Ovary (tissue), 10 donors: ENCODE measurements at regions of chr1 and their contacts with region 1.

Region 1: GRCh38 chr1:67766141-67766978 is 66.9 kb downstream of the GNG12 start:
- DNase-seq: peak; percentile 65 to 76 (median 73)
- H3K4me3 ChIP-seq: peak overlapping the region; percentile 19
- H3K27ac ChIP-seq: peak overlapping the region in 1 of 2 donors; percentile 38
- H3K4me1 ChIP-seq: no peaks in the 10 kb centered on the region
- H3K27me3 ChIP-seq: no peaks in the 10 kb centered on the region
- CTCF ChIP-seq: peak; percentile 67 to 87 (median 87)
- EP300 ChIP-seq: no peak
- POLR2A ChIP-seq: no peak

Region 2: GRCh38 chr1:67832737-67833601 is 66.6 kb after region 1 on chr1 and contains the start of gene GNG12:
- intact Hi-C with region 1: loop called in 1 of 4 experiments (anchors 5 kb)
- DNase-seq: peak; percentile 73 to 83 (median 80)
- H3K4me3 ChIP-seq: peak within 1 kb of the TSS; percentile 75
- H3K27ac ChIP-seq: peak within 1 kb of the TSS; percentile 65 to 72
- H3K4me1 ChIP-seq: peaks cover 6% of the 10 kb centered on the region
- H3K27me3 ChIP-seq: no peaks in the 10 kb centered on the region
- CTCF ChIP-seq: no peak
- EP300 ChIP-seq: no peak
- POLR2A ChIP-seq: peak; percentile 49
- total RNA-seq, gene GNG12: 50.6 to 84.4 (median 68.0) TPM

Region 3: DNA sequence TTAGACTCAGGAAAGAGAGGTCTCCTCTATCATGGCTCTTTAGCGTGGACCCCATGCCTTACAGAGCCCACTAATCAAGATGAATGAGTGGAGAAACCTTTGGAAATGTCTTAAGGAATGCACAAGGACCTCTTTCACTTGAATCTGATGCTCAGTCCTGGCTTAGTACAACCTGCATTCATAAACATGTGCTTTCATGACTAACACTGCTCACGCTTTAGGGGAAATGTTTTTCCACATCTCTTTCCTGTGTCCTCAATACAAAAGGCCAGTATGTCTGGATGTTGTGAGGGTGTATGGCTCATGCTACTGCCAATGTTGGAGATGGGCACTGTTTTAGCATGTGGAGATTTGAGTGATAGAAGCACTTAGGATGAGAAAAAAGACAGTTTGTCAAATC is 81.1 kb after region 1 on chr1:
- intact Hi-C with region 1: loop called in 2 of 4 experiments (anchors 5 kb)
- DNase-seq: no peak
- H3K4me3 ChIP-seq: no peak overlapping the region
- H3K27ac ChIP-seq: no peak overlapping the region
- H3K4me1 ChIP-seq: peaks cover 4% of the 10 kb centered on the region
- H3K27me3 ChIP-seq: no peaks in the 10 kb centered on the region
- CTCF ChIP-seq: no peak
- EP300 ChIP-seq: no peak
- POLR2A ChIP-seq: no peak

Region 4: GRCh38 chr1:68111519-68112436 is 345.4 kb after region 1 on chr1:
- intact Hi-C with region 1: loop called in 3 of 4 experiments (anchors 5 to 10 kb)
- DNase-seq: peak; percentile 82 to 91 (median 84)
- H3K4me3 ChIP-seq: no peak overlapping the region
- H3K27ac ChIP-seq: peak overlapping the region in 1 of 2 donors; percentile 3
- H3K4me1 ChIP-seq: peaks cover 3% of the 10 kb centered on the region
- H3K27me3 ChIP-seq: no peaks in the 10 kb centered on the region
- CTCF ChIP-seq: peak; percentile 60 to 74 (median 63)
- EP300 ChIP-seq: no peak
- POLR2A ChIP-seq: no peak

Region 5: GRCh38 chr1:68339471-68339870 is 573.1 kb after region 1 on chr1:
- intact Hi-C with region 1: loop called in 1 of 4 experiments (anchors 5 kb)
- DNase-seq: no peak
- H3K4me3 ChIP-seq: no peak overlapping the region
- H3K27ac ChIP-seq: no peak overlapping the region
- H3K4me1 ChIP-seq: peaks cover 1% of the 10 kb centered on the region
- H3K27me3 ChIP-seq: no peaks in the 10 kb centered on the region
- CTCF ChIP-seq: no peak
- EP300 ChIP-seq: no peak
- POLR2A ChIP-seq: no peak